Left colon (tissue), 2 donors: ENCODE measurements at regions of chr17 and their contacts with region 1.

Region 1: GRCh38 chr17:16537130-16537458 is 31.9 kb downstream of the ZNF287 start:
- DNase-seq: no peak
- ATAC-seq: peak; percentile 0

Region 2: DNA sequence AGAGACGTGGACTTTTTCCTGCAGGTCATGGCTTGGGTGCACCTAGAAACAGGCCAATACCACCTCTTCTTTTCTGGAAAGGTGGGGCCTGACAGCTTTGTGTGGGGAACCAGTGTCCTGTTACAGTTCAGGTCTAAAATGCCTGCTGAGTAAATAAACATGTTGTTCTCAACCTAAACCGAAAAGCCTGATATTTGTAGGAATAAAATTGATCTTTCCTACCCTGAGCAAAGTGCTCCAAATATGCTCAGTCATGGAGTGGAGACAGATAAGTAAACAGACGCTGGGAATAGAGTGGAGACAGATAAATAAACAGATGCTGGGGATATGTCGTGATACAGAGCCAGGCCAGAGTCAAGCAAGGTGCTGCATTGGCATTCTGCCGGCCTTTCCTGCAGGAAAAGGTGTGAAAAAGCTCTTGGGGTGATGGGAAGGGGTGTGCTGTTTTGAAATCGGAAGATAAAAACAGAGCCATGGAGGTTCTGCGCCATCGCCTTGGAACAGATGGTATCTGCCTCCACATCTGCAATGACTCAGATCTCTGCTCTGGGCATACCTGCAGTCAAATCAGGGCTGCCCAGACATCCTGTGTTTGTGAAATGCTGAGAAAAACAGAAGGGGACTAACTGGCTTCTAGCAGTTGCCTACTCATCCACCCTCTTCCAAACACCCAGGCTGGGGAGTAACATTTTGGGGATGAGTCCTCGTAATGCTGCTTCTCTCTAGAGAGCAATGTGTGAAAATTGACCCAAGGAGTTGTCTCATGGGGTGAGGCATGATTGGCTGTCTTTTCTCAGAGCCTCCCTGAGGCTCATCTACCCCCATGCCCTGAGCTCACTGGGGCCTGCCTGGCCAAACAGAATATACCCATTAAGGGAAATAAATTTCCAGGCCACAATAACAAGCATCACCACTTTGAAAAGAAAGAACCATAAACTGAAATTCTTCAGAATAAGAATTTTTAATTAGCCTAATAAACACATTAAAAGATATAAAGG is 138.5 kb before region 1 on chr17:
- intact Hi-C with region 1: no loop called
- DNase-seq: no peak
- ATAC-seq: no peak

Region 3: DNA sequence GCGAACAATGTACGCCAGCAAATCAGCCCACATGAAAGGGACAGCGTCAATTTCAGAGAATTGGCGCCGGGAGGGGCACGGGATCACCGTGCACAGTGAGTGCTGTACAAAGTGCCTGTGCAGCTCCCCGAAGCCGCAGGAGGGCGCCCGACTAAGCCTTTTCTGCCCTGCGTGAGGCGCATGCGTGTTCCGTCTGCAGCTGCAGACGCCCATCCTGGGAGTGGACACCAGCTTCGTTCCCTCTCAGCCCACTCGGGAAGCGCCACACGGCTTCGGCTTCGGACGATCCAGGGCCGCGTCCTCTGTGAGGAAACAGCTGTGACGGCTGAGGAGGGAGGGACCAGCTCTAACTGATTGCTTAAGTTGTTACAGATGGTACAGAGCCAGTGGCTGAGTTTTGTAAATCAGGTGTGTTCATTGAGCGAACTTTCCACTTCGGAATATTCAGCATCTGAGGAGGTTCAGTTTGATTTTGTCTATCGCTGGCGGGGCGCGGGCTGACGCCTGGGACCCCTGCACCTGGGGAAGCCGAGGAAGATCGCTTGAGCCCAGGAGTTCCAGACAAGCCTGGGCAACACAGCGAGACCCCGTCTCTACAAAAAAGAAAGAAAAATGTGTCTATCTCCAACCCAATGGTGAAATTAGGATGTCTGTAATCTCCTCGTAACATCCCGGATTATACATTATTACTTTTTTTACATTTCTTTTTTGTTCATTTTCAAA is 47.3 kb after region 1 on chr17:
- intact Hi-C with region 1: loop called in 1 of 2 experiments (anchors 5 kb)
- DNase-seq: peak; percentile 91 to 94
- ATAC-seq: peak; percentile 97